Dendritic cell treated with granulocyte-macrophage colony-stimulating factor and Interleukin-4, amounts not matched to agents 40 ng/mL and 50 ng/mL, for 4 days (primary cell): ENCODE measurements at regions of chr1 and their contacts with region 1.

Region 1: GRCh38 chr1:156282479-156283222 is at the start of gene SMG5:
- H3K4me3 Mint-ChIP-seq: peak within 1 kb of the TSS; percentile 93
- H3K27ac Mint-ChIP-seq: peak within 1 kb of the TSS; percentile 93
- H3K4me1 Mint-ChIP-seq: peaks cover 76% of the 10 kb centered on the region
- H3K27me3 Mint-ChIP-seq: no peaks in the 10 kb centered on the region

Region 2: DNA sequence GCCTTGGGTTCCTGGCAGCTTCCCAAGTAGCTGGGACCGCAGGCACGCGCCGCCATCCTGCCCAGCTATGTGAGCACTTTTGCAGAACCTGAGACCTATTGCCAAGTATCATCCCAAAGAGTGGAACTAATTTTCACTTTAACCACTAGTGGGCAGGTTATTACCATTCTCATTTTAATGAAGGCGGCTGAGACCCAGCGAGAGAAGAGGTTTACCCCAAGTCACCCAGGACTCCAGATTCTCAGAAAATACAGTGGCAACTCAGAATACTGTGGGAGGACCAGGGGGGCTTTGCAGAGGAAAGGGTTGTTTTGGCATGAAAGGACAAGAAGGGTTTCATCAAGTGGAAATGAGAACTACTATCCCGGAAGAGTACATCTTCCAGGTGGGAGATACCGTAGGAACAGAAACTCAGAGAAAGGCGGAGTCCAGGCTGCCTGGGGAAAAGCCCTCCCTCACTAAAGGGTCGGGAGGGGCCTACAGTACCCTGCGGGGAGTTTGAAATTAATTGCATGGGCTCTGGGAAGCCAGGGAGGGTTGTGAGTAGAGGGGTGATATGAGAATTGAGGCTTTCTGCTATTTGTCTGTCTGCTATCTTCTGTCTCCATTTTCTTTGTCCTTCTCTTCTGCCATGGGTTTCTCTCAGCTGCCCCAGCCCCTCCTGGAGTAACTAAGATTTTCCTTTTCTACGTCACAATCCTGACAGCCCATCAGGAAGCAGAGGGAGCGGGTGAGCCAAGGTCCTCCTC is 136.5 kb before region 1 on chr1:
- intact Hi-C with region 1: no loop called
- H3K4me3 Mint-ChIP-seq: peak overlapping the region; percentile 37
- H3K27ac Mint-ChIP-seq: peak overlapping the region; percentile 98
- H3K4me1 Mint-ChIP-seq: peaks cover 58% of the 10 kb centered on the region
- H3K27me3 Mint-ChIP-seq: no peaks in the 10 kb centered on the region

Region 3: DNA sequence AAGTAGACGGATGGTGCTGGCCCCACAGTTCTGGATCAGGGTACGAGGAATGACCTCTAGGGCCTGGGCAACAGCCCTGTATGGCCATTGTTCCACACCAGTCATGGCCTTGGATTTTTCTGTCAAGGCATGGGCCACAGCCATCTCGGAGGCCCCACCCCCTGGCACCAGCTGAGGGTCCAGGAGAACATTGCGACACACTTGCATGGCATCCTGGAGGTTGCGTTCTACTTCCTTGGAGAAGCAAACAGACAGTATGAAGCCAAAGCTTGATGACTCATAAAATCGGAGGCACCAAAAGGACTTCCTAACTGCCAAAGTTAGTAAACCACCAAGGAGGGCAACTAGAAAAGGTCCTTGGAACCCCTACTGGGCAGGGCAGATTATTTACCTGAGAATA is 28.3 kb after region 1 on chr1:
- intact Hi-C with region 1: no loop called
- H3K4me3 Mint-ChIP-seq: no peak overlapping the region
- H3K27ac Mint-ChIP-seq: no peak overlapping the region
- H3K4me1 Mint-ChIP-seq: peaks cover 11% of the 10 kb centered on the region
- H3K27me3 Mint-ChIP-seq: no peaks in the 10 kb centered on the region

Region 4: GRCh38 chr1:156338180-156338973 is 55.7 kb after region 1 on chr1 and contains the starts of genes CCT3 and TSACC:
- intact Hi-C with region 1: loop called (anchors 10 kb)
- H3K4me3 Mint-ChIP-seq: peak within 1 kb of the TSS; percentile 98
- H3K27ac Mint-ChIP-seq: peak within 1 kb of the TSS; percentile 90
- H3K4me1 Mint-ChIP-seq: peaks cover 21% of the 10 kb centered on the region
- H3K27me3 Mint-ChIP-seq: no peaks in the 10 kb centered on the region

Region 5: DNA sequence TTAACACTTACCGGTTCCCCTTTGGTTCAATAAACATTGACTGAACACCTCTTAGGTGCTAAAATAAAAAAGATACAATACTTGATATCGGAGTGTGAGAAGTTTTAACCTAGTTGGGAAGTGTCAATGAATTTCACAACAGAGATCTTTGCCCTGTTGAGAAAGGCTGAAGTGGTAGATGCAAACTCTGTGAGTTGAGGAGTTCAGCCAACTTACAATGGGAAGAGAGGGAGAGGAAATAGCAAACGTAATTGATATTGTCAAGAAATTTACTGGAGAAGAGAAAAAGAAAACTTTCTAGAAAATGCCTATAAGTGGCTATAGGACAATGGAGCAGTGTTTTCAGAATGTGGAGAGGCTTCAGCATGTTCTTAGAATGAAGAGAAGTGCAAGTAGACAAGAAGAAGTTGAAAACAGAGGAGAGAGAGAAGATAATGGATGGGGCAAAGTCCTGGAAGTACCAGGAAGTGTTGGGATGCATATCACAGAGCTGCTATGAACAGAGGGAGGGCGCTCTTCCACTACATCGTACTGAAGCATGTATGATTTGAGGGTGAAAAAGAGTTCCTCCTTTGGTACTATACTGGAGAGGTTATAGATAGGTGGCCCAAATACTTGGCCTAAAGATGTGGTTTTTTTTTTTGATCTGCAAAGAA is 169.0 kb after region 1 on chr1:
- intact Hi-C with region 1: no loop called
- H3K4me3 Mint-ChIP-seq: no peak overlapping the region
- H3K27ac Mint-ChIP-seq: no peak overlapping the region
- H3K4me1 Mint-ChIP-seq: peaks cover 37% of the 10 kb centered on the region
- H3K27me3 Mint-ChIP-seq: peaks cover 17% of the 10 kb centered on the region